CD14-positive monocyte (primary cell): ENCODE measurements at regions of chr16 and their contacts with region 1.

Region 1: DNA sequence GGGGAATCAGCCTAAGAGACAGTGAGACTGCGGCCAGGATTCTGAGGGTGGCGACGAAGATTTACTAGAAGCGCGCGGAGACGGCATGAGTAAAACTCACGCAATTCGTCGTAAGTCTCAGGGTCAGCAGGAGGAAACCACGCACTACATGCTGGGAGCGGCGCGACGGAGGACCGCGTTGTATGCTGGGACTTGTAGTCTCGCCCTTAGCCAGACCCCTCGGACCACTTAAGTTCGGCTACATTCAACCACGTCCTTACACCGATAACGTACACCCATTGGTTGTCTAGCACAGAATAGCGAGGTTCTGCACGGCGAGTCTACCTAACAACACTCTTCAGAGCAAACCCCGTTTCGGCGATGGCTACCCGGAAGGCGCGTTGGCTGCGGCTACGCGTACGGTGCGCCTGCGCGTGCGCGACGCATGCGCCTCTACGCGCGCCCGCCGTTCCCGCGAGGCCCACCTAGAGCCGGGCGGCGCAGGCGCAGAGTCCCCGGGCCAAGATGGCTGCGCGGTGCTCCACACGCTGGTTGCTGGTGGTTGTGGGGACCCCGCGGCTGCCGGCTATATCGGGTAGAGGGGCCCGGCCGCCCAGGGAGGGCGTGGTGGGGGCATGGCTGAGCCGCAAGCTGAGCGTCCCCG is at the start of gene DNAJA3:
- DNase-seq: peak; percentile 95 to 97 (median 96)
- H3K4me3 ChIP-seq: peak within 1 kb of the TSS; percentile 77 to 91 (median 83)
- H3K4me3 Mint-ChIP-seq: peak within 1 kb of the TSS; percentile 93 to 96
- H3K27ac ChIP-seq: peak within 1 kb of the TSS; percentile 84 to 96
- H3K27ac Mint-ChIP-seq: peak within 1 kb of the TSS; percentile 97 to 100 (median 99)
- H3K4me1 ChIP-seq: peaks cover 28 to 35% of the 10 kb centered on the region in 2 donors
- H3K4me1 Mint-ChIP-seq: peaks cover 35% of the 10 kb centered on the region
- H3K27me3 ChIP-seq: no peaks in the 10 kb centered on the region
- H3K27me3 Mint-ChIP-seq: peaks cover 0 to 2% (median 0%) of the 10 kb centered on the region in 3 donors
- CTCF ChIP-seq: no peak
- polyA plus RNA-seq, gene DNAJA3: 17.1 to 27.9 (median 19.5) TPM

Region 2: GRCh38 chr16:4465977-4466779 is 40.7 kb after region 1 on chr16:
- intact Hi-C with region 1: loop called in 1 of 2 experiments (anchors 5 kb)
- DNase-seq: no peak
- H3K4me3 ChIP-seq: no peak overlapping the region
- H3K4me3 Mint-ChIP-seq: peak overlapping the region in 1 of 2 donors; percentile 31
- H3K27ac ChIP-seq: no peak overlapping the region
- H3K27ac Mint-ChIP-seq: peak overlapping the region in 2 of 7 donors; percentile 15 to 53
- H3K4me1 ChIP-seq: peaks cover 2 to 5% of the 10 kb centered on the region in 2 donors
- H3K4me1 Mint-ChIP-seq: peaks cover 3% of the 10 kb centered on the region
- H3K27me3 ChIP-seq: no peaks in the 10 kb centered on the region
- H3K27me3 Mint-ChIP-seq: peaks cover 0 to 2% (median 0%) of the 10 kb centered on the region in 3 donors
- CTCF ChIP-seq: no peak